H1 (cell line): ENCODE measurements at regions of chr1 and their contacts with region 1.

Region 1: DNA sequence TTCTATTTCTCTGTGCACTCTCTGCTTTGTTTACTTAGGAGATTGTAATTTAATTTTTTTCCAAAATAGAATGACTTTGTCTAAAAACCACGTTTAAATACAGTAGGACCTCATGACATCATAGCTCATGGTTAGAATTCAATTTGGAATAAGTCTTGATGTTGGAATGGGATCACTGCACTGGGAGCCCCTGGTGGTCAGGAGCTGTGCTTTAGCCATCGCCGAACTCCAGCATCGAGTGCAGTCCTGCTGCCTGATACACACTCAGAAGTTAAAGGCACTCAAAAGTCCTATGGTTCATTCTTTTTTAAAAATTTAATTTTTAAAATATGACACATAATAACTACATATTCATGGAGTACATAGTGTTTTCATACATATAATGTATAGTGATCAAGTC is 75.1 kb downstream of the TEX35 start:
- DNase-seq: no peak
- H3K4me3 ChIP-seq: no peak overlapping the region
- H3K27ac ChIP-seq: no peak overlapping the region
- H3K4me1 ChIP-seq: no peaks in the 10 kb centered on the region
- H3K27me3 ChIP-seq: peaks cover 3 to 10% (median 5%) of the 10 kb centered on the region in 4 experiments; a peak in 6 of 7 replicates
- CTCF ChIP-seq: peak; percentile 8 to 54 (median 35); a peak in 3 of 4 replicates
- EP300 ChIP-seq: no peak
- POLR2A ChIP-seq: no peak
- RAD21 ChIP-seq: peak in 1 of 2 experiments; percentile 19; a peak in 1 of 4 replicates

Region 2: GRCh38 chr1:178417858-178418257 is 170.1 kb before region 1 on chr1:
- CTCF ChIA-PET with region 1: no interaction called
- POLR2A ChIA-PET with region 1: no interaction called
- DNase-seq: no peak
- H3K4me3 ChIP-seq: no peak overlapping the region
- H3K27ac ChIP-seq: no peak overlapping the region
- H3K4me1 ChIP-seq: no peaks in the 10 kb centered on the region
- H3K27me3 ChIP-seq: no peaks in the 10 kb centered on the region
- CTCF ChIP-seq: no peak
- EP300 ChIP-seq: no peak
- POLR2A ChIP-seq: no peak
- RAD21 ChIP-seq: no peak

Region 3: DNA sequence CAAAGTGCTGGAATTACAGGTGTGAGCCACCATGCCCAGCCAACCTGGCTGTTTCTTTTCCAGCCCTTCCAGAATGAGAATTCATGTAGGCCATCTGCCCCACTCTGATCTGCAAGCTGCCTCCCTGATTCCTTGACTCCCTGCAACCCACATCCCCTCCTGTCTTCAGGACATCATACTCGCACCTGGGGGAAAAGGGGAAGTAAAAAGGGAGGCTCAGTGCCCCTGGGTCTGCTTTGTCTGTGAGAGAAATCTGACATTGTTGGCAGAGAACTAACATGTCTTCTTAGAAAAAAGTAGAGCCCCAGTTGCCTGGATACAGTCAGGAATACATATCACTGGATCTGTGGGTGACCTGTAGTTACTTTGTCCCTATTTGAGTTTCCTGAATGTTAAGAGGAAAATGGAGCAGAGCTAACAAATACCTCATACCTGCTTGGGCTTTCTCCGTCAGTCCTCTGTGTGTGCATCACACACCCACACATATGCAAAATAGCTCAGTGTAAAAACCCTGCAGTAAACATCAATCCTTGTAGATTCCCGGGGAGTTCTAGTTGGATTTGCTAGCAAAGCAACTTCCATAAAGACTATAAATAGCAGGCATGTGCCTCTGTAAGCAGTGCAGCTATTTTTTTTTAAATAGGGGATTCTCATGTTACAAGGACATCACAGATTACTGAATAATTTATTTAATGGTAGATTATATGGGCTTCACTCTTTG is 12.2 kb before region 1 on chr1:
- CTCF ChIA-PET with region 1: interaction called, 13 read pairs
- POLR2A ChIA-PET with region 1: no interaction called
- DNase-seq: no peak
- H3K4me3 ChIP-seq: peak overlapping the region in 2 of 4 experiments; percentile 0 to 9; a peak in 1 of 8 replicates
- H3K27ac ChIP-seq: peak overlapping the region; percentile 69; the same call in 1 of the 2 replicates
- H3K4me1 ChIP-seq: peaks cover 2 to 12% (median 8%) of the 10 kb centered on the region in 4 experiments
- H3K27me3 ChIP-seq: no peaks in the 10 kb centered on the region
- CTCF ChIP-seq: no peak
- EP300 ChIP-seq: no peak
- POLR2A ChIP-seq: no peak
- RAD21 ChIP-seq: no peak

Region 4: DNA sequence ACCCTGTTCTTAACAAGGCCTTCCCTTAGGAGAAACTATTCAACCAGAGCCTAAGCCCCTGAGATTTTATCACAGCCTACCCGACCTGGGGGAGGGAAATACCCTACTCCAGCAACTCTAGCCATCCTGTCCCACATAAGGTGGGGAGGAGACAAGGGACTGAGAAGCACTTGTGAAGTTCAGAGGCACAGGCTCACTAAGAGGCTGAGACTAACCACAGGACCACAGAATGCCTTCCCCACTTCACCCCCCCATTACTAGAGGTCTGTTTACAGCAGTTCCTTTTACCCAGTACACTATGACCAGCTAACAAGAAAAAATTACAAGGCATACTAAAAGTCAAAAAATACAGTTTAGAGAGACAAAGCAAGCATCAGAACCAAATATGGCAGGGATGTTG is 11.8 kb after region 1 on chr1:
- CTCF ChIA-PET with region 1: interaction called, 28 read pairs
- POLR2A ChIA-PET with region 1: interaction called, 3 read pairs
- DNase-seq: no peak
- H3K4me3 ChIP-seq: no peak overlapping the region
- H3K27ac ChIP-seq: no peak overlapping the region
- H3K4me1 ChIP-seq: no peaks in the 10 kb centered on the region
- H3K27me3 ChIP-seq: no peaks in the 10 kb centered on the region
- CTCF ChIP-seq: no peak
- EP300 ChIP-seq: no peak
- POLR2A ChIP-seq: no peak
- RAD21 ChIP-seq: no peak

Region 5: GRCh38 chr1:178644308-178645120 is 56.5 kb after region 1 on chr1:
- CTCF ChIA-PET with region 1: interaction called, 11 read pairs
- POLR2A ChIA-PET with region 1: no interaction called
- DNase-seq: no peak
- H3K4me3 ChIP-seq: no peak overlapping the region
- H3K27ac ChIP-seq: no peak overlapping the region
- H3K4me1 ChIP-seq: peaks cover 3 to 8% (median 4%) of the 10 kb centered on the region in 4 experiments; a peak in 4 of 7 replicates
- H3K27me3 ChIP-seq: no peaks in the 10 kb centered on the region
- CTCF ChIP-seq: no peak
- EP300 ChIP-seq: no peak
- POLR2A ChIP-seq: no peak
- RAD21 ChIP-seq: no peak